H1 (cell line): ENCODE measurements at regions of chr19 and their contacts with region 1.

Region 1: DNA sequence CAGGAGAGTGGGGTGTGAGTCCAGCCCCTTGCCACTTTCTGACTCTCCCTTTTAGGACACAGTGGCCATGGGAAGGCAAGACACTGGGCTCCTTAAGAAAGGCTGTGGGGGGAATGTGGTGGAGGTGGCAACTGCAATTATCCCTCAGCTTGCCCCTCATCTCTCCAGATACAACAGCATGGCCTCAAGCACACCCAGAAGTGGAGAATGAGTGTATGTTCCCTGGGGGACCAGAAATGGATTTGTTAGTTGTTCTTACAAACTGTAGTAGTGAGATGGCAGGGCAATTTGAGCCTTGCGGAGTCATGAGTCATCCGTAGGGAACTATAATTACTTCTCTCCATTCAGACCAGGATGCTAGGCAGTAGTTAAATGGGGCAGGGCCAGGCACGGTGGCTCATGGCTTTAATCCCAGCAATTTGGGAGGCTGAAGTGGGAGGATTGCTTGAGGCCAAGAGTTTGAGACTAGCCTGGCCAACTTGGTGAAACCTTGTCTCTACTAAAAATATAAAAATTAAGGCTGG is 25.6 kb upstream of the CXCL17 start:
- DNase-seq: no peak
- H3K4me3 ChIP-seq: no peak overlapping the region
- H3K27ac ChIP-seq: no peak overlapping the region
- H3K4me1 ChIP-seq: peaks cover 11 to 20% (median 15%) of the 10 kb centered on the region in 4 experiments
- H3K27me3 ChIP-seq: no peaks in the 10 kb centered on the region
- CTCF ChIP-seq: no peak
- EP300 ChIP-seq: no peak
- POLR2A ChIP-seq: no peak
- RAD21 ChIP-seq: no peak

Region 2: DNA sequence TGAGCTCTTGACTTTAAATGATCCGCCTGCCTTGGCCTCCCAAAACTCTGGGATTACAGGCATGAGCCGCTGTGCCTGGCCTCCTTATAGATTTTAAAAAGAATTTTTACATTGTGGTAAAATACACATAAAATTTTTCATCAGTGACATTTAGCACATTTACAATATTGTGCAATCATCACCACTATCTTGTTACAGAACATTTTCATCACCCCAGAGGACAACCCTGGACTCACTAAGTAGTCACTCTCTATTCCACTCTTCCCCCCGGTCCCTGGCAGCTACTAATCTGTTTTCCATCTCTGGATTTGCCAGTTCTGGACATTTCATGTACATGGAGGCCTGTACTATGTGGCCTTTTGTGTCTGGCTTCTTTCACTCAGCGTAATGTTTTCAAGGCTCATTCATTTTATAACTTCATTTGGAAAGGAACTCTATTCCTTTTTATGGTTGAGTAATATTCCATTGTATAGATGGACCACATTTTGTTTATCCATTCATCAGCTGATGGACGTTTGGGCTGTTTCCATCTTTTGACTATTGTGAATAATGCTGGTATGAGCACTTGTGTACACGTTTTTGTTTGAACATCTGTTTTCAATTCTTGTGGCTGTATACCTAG is 123.0 kb before region 1 on chr19:
- CTCF ChIA-PET with region 1: no interaction called
- POLR2A ChIA-PET with region 1: no interaction called
- DNase-seq: no peak
- H3K4me3 ChIP-seq: no peak overlapping the region
- H3K27ac ChIP-seq: no peak overlapping the region
- H3K4me1 ChIP-seq: no peaks in the 10 kb centered on the region
- H3K27me3 ChIP-seq: no peaks in the 10 kb centered on the region
- CTCF ChIP-seq: no peak
- EP300 ChIP-seq: no peak
- POLR2A ChIP-seq: no peak
- RAD21 ChIP-seq: no peak

Region 3: DNA sequence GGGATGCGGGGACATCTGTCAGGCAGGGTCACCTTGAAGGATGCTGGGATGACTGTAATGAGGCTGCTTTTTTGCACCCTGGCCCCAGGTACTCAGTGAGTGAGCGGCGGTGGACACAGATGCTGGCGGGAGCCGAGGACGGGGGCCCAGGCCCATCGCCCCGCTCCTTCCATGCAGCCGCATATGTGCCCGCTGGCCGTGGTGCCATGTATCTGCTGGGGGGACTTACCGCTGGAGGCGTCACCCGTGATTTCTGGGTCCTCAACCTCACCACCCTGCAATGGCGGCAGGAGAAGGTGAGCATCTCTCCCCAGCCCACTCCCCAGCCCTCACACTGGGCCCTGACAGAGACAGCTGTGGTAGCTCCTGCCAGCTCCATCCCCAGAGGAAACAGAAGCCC is 111.6 kb before region 1 on chr19:
- CTCF ChIA-PET with region 1: no interaction called
- POLR2A ChIA-PET with region 1: no interaction called
- DNase-seq: no peak
- H3K4me3 ChIP-seq: no peak overlapping the region
- H3K27ac ChIP-seq: no peak overlapping the region
- H3K4me1 ChIP-seq: peaks cover 0 to 6% (median 1%) of the 10 kb centered on the region in 4 experiments; a peak in 4 of 7 replicates
- H3K27me3 ChIP-seq: no peaks in the 10 kb centered on the region
- CTCF ChIP-seq: no peak
- EP300 ChIP-seq: no peak
- POLR2A ChIP-seq: no peak
- RAD21 ChIP-seq: no peak

Region 4: DNA sequence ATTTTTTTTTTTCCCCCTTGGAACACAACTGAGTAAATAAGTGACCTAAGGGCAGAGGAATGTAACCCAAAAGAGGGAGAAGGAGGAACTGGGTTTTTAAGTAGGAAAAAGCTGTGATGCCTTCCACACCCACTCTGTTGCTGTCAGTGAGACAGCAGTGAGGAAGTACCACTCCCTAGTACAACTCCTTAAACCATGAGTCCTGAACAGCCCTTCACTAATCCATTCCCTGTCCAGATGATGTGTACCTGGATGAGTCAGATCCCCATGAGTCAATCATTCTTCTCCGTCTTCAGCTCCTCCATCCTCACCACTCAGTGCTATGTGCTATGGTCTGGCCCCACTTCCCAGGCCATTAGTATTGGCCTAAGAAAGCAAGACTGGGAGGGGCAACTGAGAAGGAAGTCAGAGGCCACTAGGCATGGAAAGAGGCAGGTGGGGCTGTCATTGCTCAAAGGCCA is 12.7 kb before region 1 on chr19:
- CTCF ChIA-PET with region 1: interaction called, 24 read pairs
- POLR2A ChIA-PET with region 1: interaction called, 5 read pairs
- DNase-seq: no peak
- H3K4me3 ChIP-seq: no peak overlapping the region
- H3K27ac ChIP-seq: no peak overlapping the region
- H3K4me1 ChIP-seq: peaks cover 0 to 9% (median 5%) of the 10 kb centered on the region in 4 experiments; a peak in 5 of 7 replicates
- H3K27me3 ChIP-seq: no peaks in the 10 kb centered on the region
- CTCF ChIP-seq: no peak
- EP300 ChIP-seq: no peak
- POLR2A ChIP-seq: no peak
- RAD21 ChIP-seq: no peak

Region 5: GRCh38 chr19:42497492-42498168 is 29.3 kb after region 1 on chr19:
- CTCF ChIA-PET with region 1: no interaction called
- POLR2A ChIA-PET with region 1: no interaction called
- DNase-seq: no peak
- H3K4me3 ChIP-seq: no peak overlapping the region
- H3K27ac ChIP-seq: no peak overlapping the region
- H3K4me1 ChIP-seq: peaks cover 2 to 7% (median 4%) of the 10 kb centered on the region in 4 experiments
- H3K27me3 ChIP-seq: no peaks in the 10 kb centered on the region; a peak in 2 of 7 replicates
- CTCF ChIP-seq: no peak
- EP300 ChIP-seq: no peak
- POLR2A ChIP-seq: no peak
- RAD21 ChIP-seq: no peak

Region 6: DNA sequence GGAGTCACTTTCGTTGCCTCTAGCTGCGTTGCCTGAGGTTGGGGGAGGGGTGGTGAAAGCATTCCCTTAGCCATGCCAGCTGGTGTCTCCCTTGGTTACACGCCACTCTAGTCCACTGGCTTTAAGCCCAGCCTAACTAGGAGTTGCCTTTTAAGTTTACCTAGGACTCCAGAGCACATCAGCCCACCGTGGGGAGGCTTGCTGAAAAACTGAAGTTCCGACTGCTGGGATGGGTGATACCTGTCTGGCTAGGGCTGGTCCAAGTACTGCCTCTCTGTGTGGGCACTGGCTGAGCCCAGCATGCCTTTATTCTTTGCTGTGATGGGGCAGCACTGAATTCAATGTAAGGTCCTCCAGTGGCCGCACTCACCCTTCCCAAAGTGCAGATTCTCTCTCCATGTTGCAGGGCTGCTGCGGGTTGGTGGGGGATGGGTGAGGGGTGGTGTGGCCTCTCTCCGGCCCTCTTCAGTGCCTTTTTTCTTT is 71.8 kb after region 1 on chr19:
- CTCF ChIA-PET with region 1: interaction called, 13 read pairs
- POLR2A ChIA-PET with region 1: no interaction called
- DNase-seq: peak in 1 of 2 experiments; percentile 61
- H3K4me3 ChIP-seq: peak overlapping the region in 1 of 4 experiments; percentile 18; a peak in 1 of 8 replicates
- H3K27ac ChIP-seq: no peak overlapping the region
- H3K4me1 ChIP-seq: peaks cover 4 to 12% (median 9%) of the 10 kb centered on the region in 4 experiments
- H3K27me3 ChIP-seq: no peaks in the 10 kb centered on the region; a peak in 3 of 7 replicates
- CTCF ChIP-seq: no peak
- EP300 ChIP-seq: no peak
- POLR2A ChIP-seq: no peak
- RAD21 ChIP-seq: no peak

Region 7: GRCh38 chr19:42872578-42872977 is 404.2 kb after region 1 on chr19:
- CTCF ChIA-PET with region 1: no interaction called
- POLR2A ChIA-PET with region 1: no interaction called
- DNase-seq: no peak
- H3K4me3 ChIP-seq: no peak overlapping the region
- H3K27ac ChIP-seq: no peak overlapping the region
- H3K4me1 ChIP-seq: no peaks in the 10 kb centered on the region
- H3K27me3 ChIP-seq: no peaks in the 10 kb centered on the region
- CTCF ChIP-seq: no peak
- EP300 ChIP-seq: no peak
- POLR2A ChIP-seq: no peak
- RAD21 ChIP-seq: no peak